Naive thymus-derived CD4-positive, alpha-beta T cell (primary cell): ENCODE measurements at regions of chr15 and their contacts with region 1.

Region 1: DNA sequence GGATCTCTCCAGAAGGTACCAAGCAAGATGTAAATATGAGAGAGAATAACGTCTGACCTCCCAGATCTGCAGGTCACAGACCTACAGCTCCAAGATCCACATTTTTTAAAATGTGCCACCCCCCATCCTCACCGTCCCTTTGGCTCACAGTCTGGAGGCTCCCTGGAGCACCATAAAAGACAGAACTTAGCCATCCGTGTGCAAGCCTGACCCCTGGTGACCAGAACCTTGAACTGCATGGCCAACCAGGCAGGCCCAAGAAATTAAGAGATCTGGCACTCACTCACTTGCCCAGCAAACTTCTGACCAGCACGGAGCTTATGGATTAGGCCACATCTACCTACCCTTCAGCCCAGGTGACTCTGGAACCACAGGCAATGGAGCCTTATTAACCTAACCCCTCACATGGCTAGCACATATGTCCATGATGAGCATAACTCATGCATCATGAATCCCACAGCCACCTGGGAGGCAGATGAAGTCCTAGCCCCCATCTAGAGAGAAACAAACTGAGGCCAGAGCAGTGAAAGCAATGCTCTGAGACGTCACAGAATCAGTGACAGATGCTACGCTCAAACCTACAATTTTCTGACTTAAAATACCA is 275.3 kb downstream of the UACA start:
- DNase-seq: peak; percentile 42 to 79 (median 62)
- ATAC-seq: peak; percentile 36
- H3K4me3 ChIP-seq: no peak overlapping the region
- H3K4me3 Mint-ChIP-seq: peak overlapping the region in 3 of 10 donors; percentile 13 to 36 (median 33)
- H3K27ac ChIP-seq: no peak overlapping the region
- H3K27ac Mint-ChIP-seq: peak overlapping the region in 2 of 9 donors; percentile 36 to 84
- H3K4me1 ChIP-seq: peaks cover 42 to 46% of the 10 kb centered on the region in 2 donors
- H3K4me1 Mint-ChIP-seq: peaks cover 45 to 86% (median 61%) of the 10 kb centered on the region in 7 donors
- H3K27me3 ChIP-seq: no peaks in the 10 kb centered on the region
- H3K27me3 Mint-ChIP-seq: peaks cover 0 to 37% (median 6%) of the 10 kb centered on the region in 5 donors

Region 2: GRCh38 chr15:69468241-69469121 is 1019.6 kb before region 1 on chr15:
- CTCF ChIA-PET with region 1: interaction called, 3 read pairs
- POLR2A ChIA-PET with region 1: interaction called, 4 read pairs
- intact Hi-C with region 1: loop called in 1 of 2 experiments (anchors 2 kb)
- DNase-seq: peak; percentile 49 to 92 (median 84)
- ATAC-seq: peak; percentile 95
- H3K4me3 ChIP-seq: peak overlapping the region; percentile 3
- H3K4me3 Mint-ChIP-seq: peak overlapping the region; percentile 46 to 78 (median 63)
- H3K27ac ChIP-seq: peak overlapping the region; percentile 82
- H3K27ac Mint-ChIP-seq: peak overlapping the region; percentile 86 to 98 (median 94)
- H3K4me1 ChIP-seq: peaks cover 22 to 27% of the 10 kb centered on the region in 2 donors
- H3K4me1 Mint-ChIP-seq: peaks cover 17 to 36% (median 22%) of the 10 kb centered on the region in 7 donors
- H3K27me3 ChIP-seq: no peaks in the 10 kb centered on the region
- H3K27me3 Mint-ChIP-seq: peaks cover 0 to 32% (median 0%) of the 10 kb centered on the region in 5 donors

Region 3: DNA sequence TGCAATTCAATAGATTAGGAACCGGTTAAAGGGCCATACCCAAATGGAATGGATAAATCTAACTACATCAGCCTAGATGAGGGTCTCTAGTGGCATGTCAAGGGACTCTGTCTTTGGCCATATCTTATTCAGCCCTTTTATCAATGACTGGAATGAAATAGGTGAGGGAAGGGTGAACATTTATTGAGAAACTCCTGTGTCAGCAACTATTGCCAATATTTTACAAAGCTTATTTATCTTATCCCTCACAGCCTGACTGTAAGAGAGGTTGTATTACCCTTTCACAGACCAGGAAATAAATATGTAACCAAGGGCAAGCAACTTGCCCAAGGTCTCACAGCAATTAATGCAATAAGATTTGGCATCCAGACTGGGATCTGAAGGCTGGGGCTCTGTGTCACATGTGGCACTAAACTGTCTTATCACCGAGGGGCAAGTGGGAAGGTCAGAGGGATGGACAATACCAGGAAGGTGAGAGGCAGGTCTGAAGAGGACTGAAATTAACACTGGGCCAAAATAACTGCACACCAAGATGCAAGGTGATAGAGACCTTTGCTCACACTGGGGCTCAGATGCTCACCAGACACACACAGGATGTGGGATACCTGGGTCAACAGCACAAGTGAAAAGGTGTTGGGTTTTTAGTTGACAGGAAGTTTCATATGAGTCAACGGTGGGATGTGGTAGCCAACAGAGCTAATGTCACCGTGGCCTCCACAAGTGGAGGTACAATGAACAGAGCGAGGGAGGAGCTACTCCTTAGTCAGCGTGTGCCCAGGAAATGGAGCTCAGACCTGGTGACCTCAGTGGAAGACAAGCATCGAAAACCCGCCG is 774.2 kb before region 1 on chr15:
- CTCF ChIA-PET with region 1: no interaction called
- POLR2A ChIA-PET with region 1: no interaction called
- intact Hi-C with region 1: loop called in 1 of 2 experiments (anchors 2 kb)
- DNase-seq: peak in 8 of 9 donors; percentile 60 to 80 (median 70)
- ATAC-seq: peak; percentile 88
- H3K4me3 ChIP-seq: no peak overlapping the region
- H3K4me3 Mint-ChIP-seq: peak overlapping the region; percentile 52 to 80 (median 72)
- H3K27ac ChIP-seq: no peak overlapping the region
- H3K27ac Mint-ChIP-seq: peak overlapping the region; percentile 71 to 90 (median 78)
- H3K4me1 ChIP-seq: peaks cover 32 to 50% of the 10 kb centered on the region in 2 donors
- H3K4me1 Mint-ChIP-seq: peaks cover 31 to 63% (median 54%) of the 10 kb centered on the region in 7 donors
- H3K27me3 ChIP-seq: no peaks in the 10 kb centered on the region
- H3K27me3 Mint-ChIP-seq: peaks cover 0 to 22% (median 0%) of the 10 kb centered on the region in 5 donors

Region 4: DNA sequence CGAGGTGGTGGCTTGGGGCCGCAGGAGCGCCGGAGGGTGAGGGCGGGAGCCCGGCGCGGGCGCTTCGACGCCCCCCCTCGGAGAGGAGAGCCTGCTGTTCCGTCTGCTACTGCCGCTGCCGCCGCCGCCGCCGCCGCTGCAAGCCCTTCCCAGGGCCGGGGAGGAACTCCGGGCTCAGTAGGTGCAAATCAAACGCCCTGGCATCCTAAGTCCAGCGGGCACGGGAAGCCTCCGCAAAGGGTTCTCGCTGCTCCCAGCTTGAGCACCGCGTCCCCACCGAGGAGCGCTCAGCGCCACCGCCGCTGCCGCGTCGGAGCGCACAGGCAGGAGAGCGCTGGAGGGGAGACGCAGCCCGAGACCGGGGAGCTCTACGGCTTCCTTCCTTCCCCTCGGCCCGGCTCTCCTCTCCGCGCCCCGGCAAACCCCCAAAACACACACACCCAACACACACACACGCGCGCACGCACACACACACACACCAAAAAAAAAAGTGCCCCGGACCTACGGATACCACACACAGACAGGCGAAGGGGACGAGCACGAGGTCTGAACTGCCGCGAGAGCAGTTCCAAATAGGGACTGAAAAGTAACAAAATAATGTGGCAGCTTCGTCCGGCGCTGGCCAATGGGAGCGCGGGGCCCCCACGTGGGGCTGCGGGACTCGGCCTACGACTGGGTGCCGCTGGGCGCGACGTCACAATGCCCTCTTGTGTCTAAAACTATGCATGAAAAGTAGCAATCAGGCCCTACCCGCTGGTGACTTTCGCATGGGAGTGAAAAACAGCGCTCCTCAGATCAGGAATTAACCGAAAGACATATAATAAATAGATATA is 390.6 kb before region 1 on chr15 and contains the start of gene TLE3:
- CTCF ChIA-PET with region 1: interaction called, 3 read pairs
- POLR2A ChIA-PET with region 1: interaction called, 5 read pairs
- intact Hi-C with region 1: loop called (anchors 1 kb)
- DNase-seq: peak; percentile 94 to 99 (median 98)
- ATAC-seq: peak; percentile 72
- H3K4me3 ChIP-seq: peak within 1 kb of the TSS; percentile 87
- H3K4me3 Mint-ChIP-seq: peak within 1 kb of the TSS; percentile 91 to 100 (median 99)
- H3K27ac ChIP-seq: peak within 1 kb of the TSS; percentile 87
- H3K27ac Mint-ChIP-seq: peak within 1 kb of the TSS; percentile 96 to 100 (median 98)
- H3K4me1 ChIP-seq: peaks cover 33 to 44% of the 10 kb centered on the region in 2 donors
- H3K4me1 Mint-ChIP-seq: peaks cover 34 to 62% (median 39%) of the 10 kb centered on the region in 7 donors
- H3K27me3 ChIP-seq: no peaks in the 10 kb centered on the region
- H3K27me3 Mint-ChIP-seq: peaks cover 0 to 27% (median 4%) of the 10 kb centered on the region in 5 donors
- total RNA-seq, gene TLE3: 84.5 to 183 (median 120) TPM

Region 5: GRCh38 chr15:70474471-70475396 is 13.4 kb before region 1 on chr15:
- CTCF ChIA-PET with region 1: interaction called, 8 read pairs
- POLR2A ChIA-PET with region 1: no interaction called
- intact Hi-C with region 1: loop called (anchors 2 kb)
- DNase-seq: peak in 3 of 9 donors; percentile 26 to 38 (median 38)
- ATAC-seq: peak; percentile 78
- H3K4me3 ChIP-seq: peak overlapping the region; percentile 55
- H3K4me3 Mint-ChIP-seq: peak overlapping the region; percentile 77 to 88 (median 83)
- H3K27ac ChIP-seq: no peak overlapping the region
- H3K27ac Mint-ChIP-seq: peak overlapping the region in 8 of 9 donors; percentile 39 to 88 (median 64)
- H3K4me1 ChIP-seq: peaks cover 19 to 33% of the 10 kb centered on the region in 2 donors
- H3K4me1 Mint-ChIP-seq: peaks cover 23 to 51% (median 35%) of the 10 kb centered on the region in 7 donors
- H3K27me3 ChIP-seq: peaks cover 0 to 4% of the 10 kb centered on the region in 2 donors
- H3K27me3 Mint-ChIP-seq: peaks cover 0 to 70% (median 7%) of the 10 kb centered on the region in 5 donors

Region 6: GRCh38 chr15:70535071-70535954 is 47.2 kb after region 1 on chr15:
- CTCF ChIA-PET with region 1: interaction called, 10 read pairs
- POLR2A ChIA-PET with region 1: interaction called, 21 read pairs
- intact Hi-C with region 1: loop called in 1 of 2 experiments (anchors 1 kb)
- DNase-seq: peak; percentile 35 to 82 (median 77)
- ATAC-seq: peak; percentile 86
- H3K4me3 ChIP-seq: peak overlapping the region; percentile 66
- H3K4me3 Mint-ChIP-seq: peak overlapping the region; percentile 83 to 99 (median 92)
- H3K27ac ChIP-seq: peak overlapping the region; percentile 74
- H3K27ac Mint-ChIP-seq: peak overlapping the region; percentile 87 to 97 (median 95)
- H3K4me1 ChIP-seq: peaks cover 33 to 50% of the 10 kb centered on the region in 2 donors
- H3K4me1 Mint-ChIP-seq: peaks cover 44 to 87% (median 75%) of the 10 kb centered on the region in 7 donors
- H3K27me3 ChIP-seq: no peaks in the 10 kb centered on the region
- H3K27me3 Mint-ChIP-seq: peaks cover 0 to 23% (median 0%) of the 10 kb centered on the region in 5 donors